ENCODE measurements at regions of chr17 and their contacts with region 1.

Region 1: GRCh38 chr17:1769822-1770477 is 8.1 kb downstream of the SERPINF1 start:
- DNase-seq: peak; percentile 94
- H3K4me3 ChIP-seq: no peak overlapping the region
- H3K27ac ChIP-seq: peak overlapping the region; percentile 76
- H3K4me1 ChIP-seq: peaks cover 19% of the 10 kb centered on the region
- H3K27me3 ChIP-seq: no peaks in the 10 kb centered on the region
- CTCF ChIP-seq: no peak

Region 2: GRCh38 chr17:1742371-1743087 is 27.4 kb before region 1 on chr17 and contains the start of gene SERPINF2:
- CTCF ChIA-PET with region 1: no interaction called
- dilution Hi-C with region 1: no loop called
- in situ Hi-C with region 1: no loop called
- intact Hi-C with region 1: no loop called
- DNase-seq: no peak
- H3K4me3 ChIP-seq: no peak within 1 kb of the TSS
- H3K27ac ChIP-seq: no peak within 1 kb of the TSS
- H3K4me1 ChIP-seq: peaks cover 9% of the 10 kb centered on the region
- H3K27me3 ChIP-seq: no peaks in the 10 kb centered on the region
- CTCF ChIP-seq: no peak
- total RNA-seq, gene SERPINF2: 5.7 to 7.3 TPM

Region 3: DNA sequence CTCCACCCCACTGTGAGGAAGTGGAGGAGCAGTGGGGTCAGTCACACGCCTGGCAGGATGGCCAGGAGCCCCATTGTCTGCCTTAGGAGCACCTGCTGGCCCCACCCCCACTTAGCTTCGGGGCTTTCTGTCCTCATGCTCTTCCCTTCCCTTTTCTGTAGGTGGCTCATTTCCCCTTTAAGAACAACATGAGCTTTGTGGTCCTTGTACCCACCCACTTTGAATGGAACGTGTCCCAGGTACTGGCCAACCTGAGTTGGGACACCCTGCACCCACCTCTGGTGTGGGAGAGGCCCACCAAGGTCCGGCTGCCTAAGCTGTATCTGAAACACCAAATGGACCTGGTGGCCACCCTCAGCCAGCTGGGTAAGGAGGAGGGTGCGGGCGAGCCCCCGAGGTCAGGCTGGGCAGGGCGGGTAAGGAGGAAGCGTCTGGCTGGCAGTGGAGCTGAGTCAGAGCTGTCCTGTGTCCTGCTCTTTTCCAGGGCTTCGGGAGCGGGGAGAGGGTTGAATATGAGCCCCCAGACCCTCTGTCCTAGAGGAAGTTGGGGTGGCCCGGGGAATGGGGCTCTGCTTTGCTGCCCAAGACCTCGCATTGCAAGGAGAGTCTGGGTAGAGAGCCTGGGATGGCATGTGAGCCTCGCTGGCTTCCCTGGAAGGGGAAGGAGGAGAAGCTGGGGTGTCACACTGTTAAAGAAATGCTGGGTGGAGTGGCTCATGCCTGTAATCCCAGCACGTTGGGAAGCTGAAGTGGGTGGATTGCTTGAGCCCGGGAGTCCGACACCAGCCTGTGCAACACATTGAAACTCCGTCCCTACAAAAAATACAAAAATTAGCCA is 17.3 kb before region 1 on chr17:
- CTCF ChIA-PET with region 1: no interaction called
- dilution Hi-C with region 1: no loop called
- in situ Hi-C with region 1: no loop called
- intact Hi-C with region 1: loop called (anchors 2 kb)
- DNase-seq: peak; percentile 78
- H3K4me3 ChIP-seq: peak overlapping the region; percentile 37 to 49 (median 48)
- H3K27ac ChIP-seq: peak overlapping the region; percentile 41
- H3K4me1 ChIP-seq: peaks cover 29% of the 10 kb centered on the region
- H3K27me3 ChIP-seq: no peaks in the 10 kb centered on the region
- CTCF ChIP-seq: no peak

Region 4: GRCh38 chr17:2421315-2422147 is 651.6 kb after region 1 on chr17:
- CTCF ChIA-PET with region 1: no interaction called
- dilution Hi-C with region 1: no loop called
- in situ Hi-C with region 1: no loop called
- intact Hi-C with region 1: no loop called
- DNase-seq: peak; percentile 25
- H3K4me3 ChIP-seq: no peak overlapping the region
- H3K27ac ChIP-seq: no peak overlapping the region
- H3K4me1 ChIP-seq: peaks cover 12% of the 10 kb centered on the region
- H3K27me3 ChIP-seq: no peaks in the 10 kb centered on the region
- CTCF ChIP-seq: peak; percentile 28 to 46